A549 (cell line): ENCODE measurements at regions of chr11 and their contacts with region 1.

Region 1: DNA sequence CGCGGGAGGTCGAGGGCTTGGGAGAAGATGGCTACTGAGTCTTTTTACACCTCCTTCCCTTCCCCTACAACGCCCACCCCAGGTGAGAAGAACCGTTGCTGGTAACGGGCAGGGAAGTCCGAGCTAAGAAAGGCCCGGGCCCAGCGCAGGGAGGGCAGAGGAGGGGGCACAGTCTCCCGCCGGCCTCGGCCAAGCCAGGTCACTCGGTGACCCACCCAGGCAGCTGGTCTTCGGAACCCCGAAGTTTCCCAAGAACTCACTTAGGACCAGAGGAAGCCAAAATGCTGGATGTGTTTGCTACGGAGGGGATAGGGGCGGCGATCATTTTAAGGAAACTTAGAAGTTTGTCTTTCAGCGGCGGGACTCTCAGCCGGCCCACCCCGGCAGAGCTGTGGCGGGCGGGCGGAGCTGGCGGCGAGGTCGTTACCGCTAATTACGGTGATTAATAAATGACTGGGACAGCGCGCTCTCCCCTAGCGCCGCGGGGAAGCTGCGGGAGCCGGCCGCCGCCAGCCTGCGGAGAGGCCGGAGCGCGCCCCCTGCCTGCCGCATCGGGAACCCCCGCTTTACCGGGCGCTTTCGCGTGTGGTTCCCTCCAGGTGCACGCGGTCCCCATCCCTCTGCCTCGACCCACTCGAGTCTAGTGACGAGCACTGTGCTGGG is 820 bp downstream of the ROBO3 start:
- DNase-seq: peak in 1 of 2 experiments; percentile 64
- ATAC-seq: peak; percentile 30 to 75; a peak in 3 of 6 replicates
- H3K4me3 ChIP-seq: peak overlapping the region; percentile 40
- H3K27ac ChIP-seq: no peak overlapping the region
- H3K4me1 ChIP-seq: peaks cover 14% of the 10 kb centered on the region; the same call in 2 of the 3 replicates
- CTCF ChIP-seq: peak; percentile 61
- EP300 ChIP-seq: no peak
- POLR2A ChIP-seq: no peak
- RAD21 ChIP-seq: peak; percentile 22 to 27; a peak in 1 of 5 replicates

Region 2: DNA sequence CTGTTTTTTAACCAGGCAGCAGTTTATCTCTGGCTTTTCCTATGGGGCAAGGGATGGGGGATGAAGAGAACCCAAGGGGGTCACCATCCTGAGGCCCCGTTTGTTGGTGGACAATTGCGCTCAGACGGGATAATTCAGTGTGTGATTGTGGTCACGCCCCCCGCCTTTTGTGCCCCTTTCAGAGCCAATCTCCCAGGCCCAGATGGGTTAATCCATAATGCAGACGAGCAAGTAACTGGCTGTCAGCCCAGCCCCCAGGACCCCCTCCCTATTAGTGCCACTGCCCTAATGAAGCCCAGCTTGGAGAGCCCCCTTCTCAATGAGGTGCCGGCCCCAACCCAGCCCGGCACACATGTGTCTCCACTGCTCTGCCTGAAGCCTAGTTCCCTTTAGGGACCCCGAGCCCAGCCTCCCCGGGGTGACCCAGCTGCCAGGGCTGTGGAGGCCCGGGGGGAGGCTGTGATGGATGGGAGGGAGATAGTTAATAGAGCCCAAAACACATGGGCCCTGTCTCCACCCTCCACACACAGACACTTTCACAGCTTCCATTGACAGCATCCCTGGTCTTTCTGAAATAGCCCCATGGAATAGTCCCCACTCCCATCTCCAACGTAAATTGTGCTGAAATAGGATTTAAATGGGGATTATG is 19.9 kb before region 1 on chr11:
- CTCF ChIA-PET with region 1: interaction called, 22 read pairs
- POLR2A ChIA-PET with region 1: no interaction called
- DNase-seq: no peak
- ATAC-seq: no peak
- H3K4me3 ChIP-seq: no peak overlapping the region
- H3K27ac ChIP-seq: no peak overlapping the region
- H3K4me1 ChIP-seq: no peaks in the 10 kb centered on the region
- CTCF ChIP-seq: no peak
- EP300 ChIP-seq: no peak
- POLR2A ChIP-seq: no peak
- RAD21 ChIP-seq: no peak

Region 3: GRCh38 chr11:124855437-124855836 is 10.6 kb before region 1 on chr11:
- CTCF ChIA-PET with region 1: interaction called, 12 read pairs
- POLR2A ChIA-PET with region 1: no interaction called
- DNase-seq: no peak
- ATAC-seq: no peak
- H3K4me3 ChIP-seq: no peak overlapping the region
- H3K27ac ChIP-seq: no peak overlapping the region
- H3K4me1 ChIP-seq: no peaks in the 10 kb centered on the region
- CTCF ChIP-seq: no peak
- EP300 ChIP-seq: no peak
- POLR2A ChIP-seq: no peak
- RAD21 ChIP-seq: no peak